AG04450 (cell line): ENCODE measurements at regions of chr5 and their contacts with region 1.

Region 1: GRCh38 chr5:143003329-143003636 is 233.1 kb downstream of the ARHGAP26 start:
- DNase-seq: no peak
- H3K4me3 ChIP-seq: no peak overlapping the region
- H3K27ac ChIP-seq: peak overlapping the region; percentile 85
- H3K27me3 ChIP-seq: no peaks in the 10 kb centered on the region
- CTCF ChIP-seq: no peak

Region 2: DNA sequence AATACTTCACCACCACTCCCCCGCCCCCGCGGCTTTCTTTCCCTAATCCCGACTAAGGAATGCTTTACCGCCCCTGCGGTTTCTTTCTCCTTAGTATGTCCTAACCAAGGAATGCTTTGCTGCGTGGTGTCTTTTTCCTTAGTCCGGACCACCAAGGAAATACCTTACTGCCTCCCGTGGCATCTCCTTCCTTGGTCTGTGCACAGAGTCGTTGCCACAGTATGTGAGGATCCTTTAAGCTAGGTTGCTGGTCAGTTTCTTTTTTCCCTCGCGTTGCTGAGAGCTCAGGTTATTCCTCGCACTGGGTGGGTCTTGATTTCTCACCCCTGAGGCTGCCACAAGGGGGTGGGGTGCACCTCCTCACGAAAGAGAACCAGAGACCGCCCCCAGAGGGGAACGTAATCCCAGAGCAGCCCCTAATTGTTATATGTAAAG is 90.8 kb after region 1 on chr5:
- CTCF ChIA-PET with region 1: no interaction called
- POLR2A ChIA-PET with region 1: no interaction called
- DNase-seq: no peak
- H3K4me3 ChIP-seq: no peak overlapping the region; the same call in 1 of the 2 replicates
- H3K27ac ChIP-seq: no peak overlapping the region
- H3K27me3 ChIP-seq: no peaks in the 10 kb centered on the region
- CTCF ChIP-seq: peak; percentile 31

Region 3: DNA sequence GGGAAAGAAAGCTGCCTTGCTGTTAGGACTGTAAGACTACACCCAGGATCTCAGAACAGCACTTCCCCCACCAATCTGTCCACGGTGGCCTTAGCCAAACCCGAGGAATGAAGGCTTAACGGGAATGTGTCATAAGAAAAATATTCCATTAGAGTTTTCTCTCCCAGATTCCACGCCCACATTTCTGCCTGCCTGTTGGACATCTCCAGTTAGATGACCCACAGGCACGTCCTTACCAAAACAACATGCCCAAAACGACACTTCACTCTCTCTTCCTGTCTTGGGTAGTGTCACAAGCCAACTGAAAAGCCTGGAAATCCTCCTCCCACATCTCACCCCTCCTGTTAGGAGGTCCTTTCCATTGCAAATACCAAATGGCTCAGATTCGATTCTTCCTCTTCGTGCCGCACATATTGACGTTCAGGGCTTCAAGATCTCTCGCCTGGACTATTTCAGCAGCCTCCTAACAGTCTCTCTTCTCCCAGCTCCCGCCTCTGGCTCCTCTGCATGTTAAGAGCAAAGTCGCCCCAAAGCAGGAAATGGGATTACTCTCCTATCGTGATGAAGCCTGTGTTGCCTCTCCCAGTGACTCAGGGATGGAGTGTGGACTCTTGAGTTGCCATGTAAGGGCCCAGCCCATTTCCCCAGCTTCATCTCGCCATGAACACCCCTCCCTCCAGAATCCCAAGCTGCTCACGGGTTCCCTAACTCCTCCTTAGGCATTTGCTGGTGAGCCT is 240.9 kb after region 1 on chr5:
- CTCF ChIA-PET with region 1: no interaction called
- POLR2A ChIA-PET with region 1: interaction called, 12 read pairs
- DNase-seq: peak; percentile 92
- H3K4me3 ChIP-seq: peak overlapping the region; percentile 8; the same call in 1 of the 2 replicates
- H3K27ac ChIP-seq: peak overlapping the region; percentile 98
- H3K27me3 ChIP-seq: no peaks in the 10 kb centered on the region
- CTCF ChIP-seq: no peak